HEK293 (cell line): ENCODE measurements at regions of chr17 and their contacts with region 1.

Region 1: DNA sequence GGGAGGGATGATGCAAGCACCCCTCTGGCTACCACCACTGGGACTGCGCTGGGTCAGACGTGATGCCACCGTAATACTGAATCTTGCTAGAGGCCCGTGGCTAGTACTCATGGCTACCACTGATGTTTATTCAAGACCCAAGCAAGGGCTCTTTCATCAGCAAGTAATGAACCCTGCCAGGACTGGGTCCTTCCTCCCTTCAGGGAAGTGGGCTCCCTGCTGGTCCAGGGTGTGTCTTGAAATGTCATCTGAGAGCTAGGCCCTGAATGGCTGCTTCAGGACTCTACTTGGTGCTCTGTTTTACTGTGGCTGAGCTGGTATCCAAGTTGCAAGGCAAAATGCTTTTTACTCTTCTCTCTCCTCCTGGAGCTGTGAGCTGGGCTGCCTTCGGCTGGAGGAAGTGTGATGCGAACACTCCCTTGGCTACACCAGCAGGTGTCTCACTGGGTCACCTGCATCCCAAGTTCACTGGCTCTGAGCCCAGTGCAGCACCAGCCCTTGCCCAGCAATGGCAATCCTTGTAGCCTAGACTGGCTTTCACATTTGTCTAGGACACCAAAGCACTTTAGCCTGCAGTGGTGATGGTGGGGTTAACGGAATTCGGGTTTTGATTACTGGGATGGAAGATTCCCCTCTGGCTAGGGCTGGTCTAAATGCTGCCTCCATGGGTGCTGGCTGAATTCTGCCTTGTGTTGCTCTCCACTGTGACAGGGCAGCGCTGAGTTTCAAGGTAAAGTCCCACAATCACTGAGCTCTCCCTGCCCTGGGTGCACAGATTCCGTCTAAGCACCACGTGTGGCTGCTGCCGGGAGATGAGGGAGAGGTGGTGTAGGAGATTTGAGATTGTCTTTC is 98.6 kb downstream of the USP22 start:
- H3K4me3 ChIP-seq: no peak overlapping the region
- H3K27ac ChIP-seq: no peak overlapping the region
- H3K4me1 ChIP-seq: peaks cover 9% of the 10 kb centered on the region
- CTCF ChIP-seq: peak; percentile 81

Region 2: GRCh38 chr17:20927308-20927977 is 16.8 kb before region 1 on chr17:
- CTCF ChIA-PET with region 1: interaction called, 12 read pairs
- POLR2A ChIA-PET with region 1: no interaction called
- H3K4me3 ChIP-seq: no peak overlapping the region
- H3K27ac ChIP-seq: no peak overlapping the region
- H3K4me1 ChIP-seq: no peaks in the 10 kb centered on the region; the same call in 1 of the 2 replicates
- CTCF ChIP-seq: no peak

Region 3: DNA sequence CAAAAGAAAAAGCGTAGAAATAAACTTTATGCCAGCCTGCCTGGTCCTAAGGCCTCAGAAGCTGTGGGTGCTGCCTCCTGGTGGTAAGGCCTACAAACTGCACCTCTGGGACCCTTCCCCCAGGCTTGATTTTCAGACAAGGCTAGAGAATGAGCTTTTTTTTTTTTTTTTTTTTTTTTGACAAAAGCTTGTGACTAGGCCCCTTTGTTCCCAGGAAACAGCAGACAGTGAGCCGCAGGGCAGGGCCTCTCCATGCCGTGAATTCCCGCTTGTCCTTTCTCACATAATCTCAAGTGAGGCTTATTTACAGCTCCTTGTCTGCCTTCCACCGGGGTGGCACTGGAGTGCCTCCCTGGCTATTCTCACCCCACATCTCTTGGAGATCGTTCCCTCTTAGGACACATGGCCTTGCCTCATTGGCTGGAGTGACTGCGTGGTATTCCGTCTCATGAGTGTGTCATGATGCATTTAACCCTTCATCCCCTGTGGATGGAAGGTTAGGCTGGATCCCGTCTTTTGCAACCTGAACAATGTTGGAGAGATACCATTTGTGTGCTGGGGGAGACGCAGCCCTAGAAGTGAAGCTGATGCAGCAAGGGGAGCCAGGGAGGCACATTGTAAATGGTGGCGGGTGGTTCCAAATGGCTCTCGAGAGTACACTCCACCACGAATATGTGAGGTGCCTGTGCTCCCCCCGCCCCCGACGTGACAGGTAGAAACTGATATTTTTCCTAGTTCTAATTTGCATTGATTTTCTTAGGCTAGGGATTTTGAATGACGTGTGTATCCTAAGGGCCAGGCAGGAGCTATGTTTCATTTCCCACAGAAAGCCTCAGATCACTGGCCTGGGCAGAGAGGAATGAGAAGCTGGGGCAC is 49.0 kb after region 1 on chr17:
- CTCF ChIA-PET with region 1: interaction called, 27 read pairs
- POLR2A ChIA-PET with region 1: no interaction called
- H3K4me3 ChIP-seq: no peak overlapping the region
- H3K27ac ChIP-seq: peak overlapping the region; percentile 41; the same call in 1 of the 2 replicates
- H3K4me1 ChIP-seq: peaks cover 3% of the 10 kb centered on the region; the same call in 1 of the 2 replicates
- CTCF ChIP-seq: peak; percentile 71

Region 4: GRCh38 chr17:21043286-21044232 is 99.3 kb after region 1 on chr17:
- CTCF ChIA-PET with region 1: no interaction called
- POLR2A ChIA-PET with region 1: no interaction called
- H3K4me3 ChIP-seq: peak overlapping the region; percentile 70
- H3K27ac ChIP-seq: peak overlapping the region; percentile 91
- H3K4me1 ChIP-seq: peaks cover 13% of the 10 kb centered on the region
- CTCF ChIP-seq: peak; percentile 98

Region 5: GRCh38 chr17:21239680-21240368 is 295.6 kb after region 1 on chr17:
- CTCF ChIA-PET with region 1: no interaction called
- POLR2A ChIA-PET with region 1: no interaction called
- H3K4me3 ChIP-seq: no peak overlapping the region
- H3K27ac ChIP-seq: no peak overlapping the region
- H3K4me1 ChIP-seq: no peaks in the 10 kb centered on the region; the same call in 1 of the 2 replicates
- CTCF ChIP-seq: peak; percentile 22; the same call in 1 of the 2 replicates